ENCODE measurements at regions of chr5 and their contacts with region 1.

Region 1: GRCh38 chr5:137778772-137779564 is 24.8 kb upstream of the HNRNPA0 start:
- DNase-seq: peak in 2 of 9 experiments; percentile 39 to 52
- ATAC-seq: no peak
- H3K4me3 ChIP-seq: no peak overlapping the region
- H3K4me3 Mint-ChIP-seq: no peak overlapping the region
- H3K27ac ChIP-seq: no peak overlapping the region
- H3K27ac Mint-ChIP-seq: no peak overlapping the region
- H3K4me1 ChIP-seq: no peaks in the 10 kb centered on the region
- H3K4me1 Mint-ChIP-seq: no peaks in the 10 kb centered on the region
- H3K27me3 ChIP-seq: no peaks in the 10 kb centered on the region
- H3K27me3 Mint-ChIP-seq: no peaks in the 10 kb centered on the region
- CTCF ChIP-seq: peak; percentile 79

Region 2: DNA sequence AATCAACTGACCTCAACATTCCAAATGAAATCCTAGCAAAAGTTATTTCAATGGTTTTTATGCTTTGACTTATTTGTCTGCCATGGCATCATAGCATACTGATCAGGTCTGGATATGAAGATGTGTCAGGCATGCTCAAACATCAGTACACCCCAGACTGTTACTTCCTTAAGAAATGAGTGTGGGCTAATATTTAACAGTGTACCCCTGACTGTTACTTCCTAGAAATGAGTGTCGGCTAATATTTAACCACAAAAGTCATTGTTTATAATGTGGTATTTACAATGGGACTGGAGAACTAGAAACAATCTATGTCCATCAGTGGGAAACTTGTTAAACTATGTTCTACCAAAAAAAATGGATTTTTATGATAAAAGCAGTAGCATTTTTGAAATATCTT is 13.3 kb after region 1 on chr5:
- CTCF ChIA-PET with region 1: interaction called, 10 read pairs
- POLR2A ChIA-PET with region 1: no interaction called
- intact Hi-C with region 1: no loop called
- DNase-seq: no peak
- ATAC-seq: no peak
- H3K4me3 ChIP-seq: no peak overlapping the region
- H3K4me3 Mint-ChIP-seq: no peak overlapping the region
- H3K27ac ChIP-seq: no peak overlapping the region
- H3K27ac Mint-ChIP-seq: no peak overlapping the region
- H3K4me1 ChIP-seq: no peaks in the 10 kb centered on the region
- H3K4me1 Mint-ChIP-seq: no peaks in the 10 kb centered on the region
- H3K27me3 ChIP-seq: no peaks in the 10 kb centered on the region
- H3K27me3 Mint-ChIP-seq: no peaks in the 10 kb centered on the region
- CTCF ChIP-seq: no peak

Region 3: DNA sequence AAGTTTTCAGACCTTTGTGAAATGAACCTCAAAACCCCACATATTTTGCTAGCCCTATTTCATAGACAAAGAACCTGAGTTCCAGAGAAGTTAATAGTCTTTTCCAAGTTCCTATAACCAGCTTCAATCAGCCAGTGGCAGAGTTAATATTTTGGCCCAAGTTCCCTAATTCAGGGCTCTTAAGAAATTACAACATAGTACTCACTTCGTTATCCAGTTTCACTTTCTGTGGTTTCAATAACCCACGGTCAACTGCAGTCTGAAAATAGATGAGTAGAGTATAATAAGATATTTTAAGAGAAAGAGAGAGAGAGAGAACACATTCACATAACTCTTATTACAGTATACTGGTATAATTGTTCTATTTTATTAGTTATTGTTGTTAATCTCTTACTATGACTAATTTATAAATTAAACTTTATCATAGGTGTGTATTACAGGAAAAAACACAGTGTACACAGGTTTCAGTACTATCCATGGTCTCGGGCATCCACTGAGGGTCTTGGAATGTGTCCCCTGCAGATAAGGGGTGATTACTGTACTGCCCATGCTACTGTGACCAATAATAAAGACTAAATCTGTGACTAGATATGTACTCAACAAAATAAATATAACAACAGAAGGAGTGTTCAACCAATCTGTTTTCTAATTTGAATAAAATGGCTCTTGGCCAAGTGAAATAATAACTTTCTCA is 79.4 kb after region 1 on chr5:
- CTCF ChIA-PET with region 1: no interaction called
- POLR2A ChIA-PET with region 1: no interaction called
- intact Hi-C with region 1: no loop called
- DNase-seq: peak in 1 of 9 experiments; percentile 22
- ATAC-seq: no peak
- H3K4me3 ChIP-seq: no peak overlapping the region
- H3K4me3 Mint-ChIP-seq: peak overlapping the region; percentile 61
- H3K27ac ChIP-seq: no peak overlapping the region
- H3K27ac Mint-ChIP-seq: peak overlapping the region; percentile 38
- H3K4me1 ChIP-seq: peaks cover 3% of the 10 kb centered on the region
- H3K4me1 Mint-ChIP-seq: peaks cover 18% of the 10 kb centered on the region
- H3K27me3 ChIP-seq: no peaks in the 10 kb centered on the region
- H3K27me3 Mint-ChIP-seq: no peaks in the 10 kb centered on the region
- CTCF ChIP-seq: no peak

Region 4: GRCh38 chr5:137954131-137954879 is 175.3 kb after region 1 on chr5:
- CTCF ChIA-PET with region 1: no interaction called
- POLR2A ChIA-PET with region 1: no interaction called
- intact Hi-C with region 1: no loop called
- DNase-seq: no peak
- ATAC-seq: no peak
- H3K4me3 ChIP-seq: no peak overlapping the region
- H3K4me3 Mint-ChIP-seq: no peak overlapping the region
- H3K27ac ChIP-seq: no peak overlapping the region
- H3K27ac Mint-ChIP-seq: peak overlapping the region; percentile 37
- H3K4me1 ChIP-seq: no peaks in the 10 kb centered on the region
- H3K4me1 Mint-ChIP-seq: no peaks in the 10 kb centered on the region
- H3K27me3 ChIP-seq: no peaks in the 10 kb centered on the region
- H3K27me3 Mint-ChIP-seq: no peaks in the 10 kb centered on the region
- CTCF ChIP-seq: no peak

Region 5: GRCh38 chr5:138065102-138065501 is 286.1 kb after region 1 on chr5:
- CTCF ChIA-PET with region 1: interaction called, 11 read pairs
- POLR2A ChIA-PET with region 1: no interaction called
- intact Hi-C with region 1: loop called in 1 of 2 experiments (anchors 5 kb)
- DNase-seq: peak in 3 of 9 experiments; percentile 9 to 14 (median 9)
- ATAC-seq: no peak
- H3K4me3 ChIP-seq: no peak overlapping the region
- H3K4me3 Mint-ChIP-seq: no peak overlapping the region
- H3K27ac ChIP-seq: no peak overlapping the region
- H3K27ac Mint-ChIP-seq: no peak overlapping the region
- H3K4me1 ChIP-seq: no peaks in the 10 kb centered on the region
- H3K4me1 Mint-ChIP-seq: peaks cover 4% of the 10 kb centered on the region
- H3K27me3 ChIP-seq: no peaks in the 10 kb centered on the region
- H3K27me3 Mint-ChIP-seq: no peaks in the 10 kb centered on the region
- CTCF ChIP-seq: no peak

Region 6: GRCh38 chr5:138128334-138128733 is 349.4 kb after region 1 on chr5:
- CTCF ChIA-PET with region 1: interaction called, 37 read pairs
- POLR2A ChIA-PET with region 1: no interaction called
- intact Hi-C with region 1: loop called in 1 of 2 experiments (anchors 1 kb)
- DNase-seq: no peak
- ATAC-seq: no peak
- H3K4me3 ChIP-seq: no peak overlapping the region
- H3K4me3 Mint-ChIP-seq: no peak overlapping the region
- H3K27ac ChIP-seq: no peak overlapping the region
- H3K27ac Mint-ChIP-seq: no peak overlapping the region
- H3K4me1 ChIP-seq: no peaks in the 10 kb centered on the region
- H3K4me1 Mint-ChIP-seq: no peaks in the 10 kb centered on the region
- H3K27me3 ChIP-seq: no peaks in the 10 kb centered on the region
- H3K27me3 Mint-ChIP-seq: peaks cover 2% of the 10 kb centered on the region
- CTCF ChIP-seq: no peak

Measured in CD8-positive, alpha-beta T cell (primary cell).